Psoas muscle (tissue), 8 donors: ENCODE measurements at regions of chr10 and their contacts with region 1.

Region 1: DNA sequence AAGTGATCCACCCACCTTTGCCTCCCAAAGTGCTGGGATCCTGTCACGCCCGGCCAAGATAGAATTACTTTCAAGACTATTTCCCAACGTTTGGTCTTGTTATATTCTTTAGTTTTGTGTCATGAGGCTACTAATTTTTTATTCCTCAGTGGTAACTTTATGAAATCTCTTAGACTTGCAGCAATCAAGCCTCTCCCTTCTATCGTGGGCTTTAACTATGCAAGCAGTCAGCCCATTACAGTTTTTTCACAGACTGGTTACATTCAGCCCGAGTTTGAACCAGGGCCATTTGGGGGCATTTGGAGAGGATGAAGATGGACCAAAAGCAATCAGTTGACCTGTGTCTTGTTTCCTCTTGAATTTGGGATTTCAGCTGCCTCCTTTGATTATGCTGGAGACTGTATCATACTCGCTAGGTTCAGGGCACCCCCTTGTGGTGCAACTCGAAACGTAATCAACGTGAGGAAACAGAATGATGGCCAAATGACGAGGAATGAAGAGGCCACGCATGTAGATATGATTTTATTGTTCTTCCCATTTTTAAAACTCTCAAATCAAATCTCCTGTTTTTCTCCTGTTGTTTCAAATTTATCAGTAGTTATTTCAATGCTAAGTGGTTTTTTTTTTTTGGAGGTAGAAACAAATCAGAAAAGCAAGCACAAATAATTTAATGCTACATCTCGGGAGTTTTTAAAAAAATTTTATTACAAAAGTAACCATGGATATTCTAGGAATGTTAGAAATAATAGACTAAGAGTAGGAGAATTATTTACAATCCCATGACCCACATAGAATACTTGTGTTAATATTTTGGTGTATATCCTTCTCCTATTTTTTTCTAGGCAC is 151.6 kb downstream of the KIAA1217 start:
- DNase-seq: peak; percentile 76 to 84
- ATAC-seq: peak; percentile 83 to 86 (median 84)
- H3K4me3 ChIP-seq: no peak overlapping the region
- H3K27ac ChIP-seq: peak overlapping the region; percentile 23
- H3K4me1 ChIP-seq: peaks cover 32% of the 10 kb centered on the region
- H3K27me3 ChIP-seq: no peaks in the 10 kb centered on the region
- CTCF ChIP-seq: peak; percentile 81

Region 2: GRCh38 chr10:23994479-23995046 is 365.9 kb before region 1 on chr10:
- intact Hi-C with region 1: loop called (anchors 5 to 10 kb)
- DNase-seq: peak; percentile 33 to 67
- ATAC-seq: peak; percentile 83 to 95 (median 90)
- H3K4me3 ChIP-seq: no peak overlapping the region
- H3K27ac ChIP-seq: no peak overlapping the region
- H3K4me1 ChIP-seq: peaks cover 6% of the 10 kb centered on the region
- H3K27me3 ChIP-seq: no peaks in the 10 kb centered on the region
- CTCF ChIP-seq: peak; percentile 93

Region 3: GRCh38 chr10:24209946-24210491 is 150.5 kb before region 1 on chr10:
- intact Hi-C with region 1: loop called in 1 of 2 experiments (anchors 5 kb)
- DNase-seq: peak in 1 of 2 donors; percentile 20
- ATAC-seq: peak in 2 of 4 donors; percentile 6 to 10
- H3K4me3 ChIP-seq: peak overlapping the region; percentile 67
- H3K27ac ChIP-seq: peak overlapping the region; percentile 93
- H3K4me1 ChIP-seq: peaks cover 57% of the 10 kb centered on the region
- H3K27me3 ChIP-seq: no peaks in the 10 kb centered on the region
- CTCF ChIP-seq: no peak

Region 4: GRCh38 chr10:24240039-24240751 is 120.3 kb before region 1 on chr10:
- intact Hi-C with region 1: loop called in 1 of 2 experiments (anchors 5 kb)
- DNase-seq: no peak
- ATAC-seq: peak; percentile 14 to 62 (median 56)
- H3K4me3 ChIP-seq: no peak overlapping the region
- H3K27ac ChIP-seq: peak overlapping the region; percentile 69
- H3K4me1 ChIP-seq: peaks cover 67% of the 10 kb centered on the region
- H3K27me3 ChIP-seq: no peaks in the 10 kb centered on the region
- CTCF ChIP-seq: no peak

Region 5: GRCh38 chr10:24310104-24310503 is 50.4 kb before region 1 on chr10:
- intact Hi-C with region 1: loop called (anchors 5 to 10 kb)
- DNase-seq: no peak
- ATAC-seq: peak; percentile 52 to 70 (median 66)
- H3K4me3 ChIP-seq: no peak overlapping the region
- H3K27ac ChIP-seq: peak overlapping the region; percentile 77
- H3K4me1 ChIP-seq: peaks cover 47% of the 10 kb centered on the region
- H3K27me3 ChIP-seq: no peaks in the 10 kb centered on the region
- CTCF ChIP-seq: peak; percentile 29

Region 6: DNA sequence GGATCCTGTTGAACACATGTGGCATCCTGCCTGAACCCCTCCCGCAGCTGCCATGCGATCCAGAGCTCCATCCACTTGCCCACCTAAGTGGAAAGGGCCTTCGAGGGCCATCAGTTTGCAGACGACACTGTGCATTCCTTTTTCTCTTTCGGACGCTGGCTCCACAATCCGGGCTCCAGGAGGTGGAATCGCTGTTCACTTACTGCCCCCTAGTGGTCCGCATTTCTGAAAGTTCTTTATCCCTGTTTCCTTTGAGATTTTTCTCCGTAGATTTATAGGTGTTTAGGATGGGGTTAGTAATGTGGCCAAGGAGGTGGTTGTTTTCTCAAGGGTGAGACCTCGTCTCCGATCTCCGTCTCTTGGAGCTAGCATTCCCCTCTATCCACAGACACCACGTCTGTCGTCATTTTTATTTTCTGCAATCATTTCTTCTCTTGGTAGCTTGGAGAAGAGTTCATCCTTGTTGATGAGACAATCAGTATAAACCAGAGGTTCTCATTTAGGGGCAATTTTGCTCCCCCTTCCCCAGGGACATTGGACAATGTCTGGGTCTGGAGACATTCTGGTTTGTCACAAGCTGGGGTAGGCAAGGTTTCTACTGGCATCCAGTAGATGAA is 158.6 kb after region 1 on chr10:
- intact Hi-C with region 1: no loop called
- DNase-seq: peak; percentile 27 to 67
- ATAC-seq: peak; percentile 64 to 79 (median 75)
- H3K4me3 ChIP-seq: no peak overlapping the region
- H3K27ac ChIP-seq: peak overlapping the region; percentile 59
- H3K4me1 ChIP-seq: peaks cover 16% of the 10 kb centered on the region
- H3K27me3 ChIP-seq: no peaks in the 10 kb centered on the region
- CTCF ChIP-seq: peak; percentile 77

Region 7: DNA sequence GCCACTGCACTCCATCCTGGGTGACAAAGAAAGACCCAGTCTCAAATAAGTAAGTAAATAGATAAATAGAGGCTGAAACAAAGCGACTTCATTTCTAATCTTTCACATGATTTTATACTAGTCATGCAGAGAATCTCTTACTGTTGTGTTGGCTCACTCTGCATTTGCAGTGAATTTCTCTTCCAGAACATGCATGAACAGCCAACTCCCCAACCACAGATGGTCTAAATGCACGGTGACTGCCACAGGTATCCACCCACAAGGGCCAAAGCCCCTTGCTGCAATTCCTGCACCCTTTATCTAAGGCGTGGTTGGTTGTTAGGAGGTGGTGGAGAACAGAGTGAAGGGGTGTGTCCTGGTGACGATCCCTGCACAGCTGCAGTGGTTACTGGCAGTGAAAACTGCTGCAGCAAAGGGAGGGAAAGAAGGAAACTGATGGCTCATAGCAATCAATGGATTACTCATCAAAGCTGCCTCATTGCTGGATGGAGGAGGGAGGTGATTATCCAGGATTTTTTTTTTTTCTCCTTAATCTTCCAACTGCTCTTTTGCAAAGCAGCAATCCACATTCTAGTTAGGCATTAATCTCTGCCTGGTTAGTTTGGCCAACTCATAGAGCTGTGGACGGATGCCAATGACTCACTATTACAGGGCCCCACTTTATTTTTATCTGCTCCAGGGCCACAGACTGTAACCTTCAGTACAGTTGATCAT is 541.3 kb after region 1 on chr10:
- intact Hi-C with region 1: no loop called
- DNase-seq: peak; percentile 32 to 64
- ATAC-seq: peak; percentile 73 to 93 (median 88)
- H3K4me3 ChIP-seq: no peak overlapping the region
- H3K27ac ChIP-seq: peak overlapping the region; percentile 4
- H3K4me1 ChIP-seq: peaks cover 15% of the 10 kb centered on the region
- H3K27me3 ChIP-seq: no peaks in the 10 kb centered on the region
- CTCF ChIP-seq: no peak